AG04449 (cell line): ENCODE measurements at regions of chr22 and their contacts with region 1.

Region 1: DNA sequence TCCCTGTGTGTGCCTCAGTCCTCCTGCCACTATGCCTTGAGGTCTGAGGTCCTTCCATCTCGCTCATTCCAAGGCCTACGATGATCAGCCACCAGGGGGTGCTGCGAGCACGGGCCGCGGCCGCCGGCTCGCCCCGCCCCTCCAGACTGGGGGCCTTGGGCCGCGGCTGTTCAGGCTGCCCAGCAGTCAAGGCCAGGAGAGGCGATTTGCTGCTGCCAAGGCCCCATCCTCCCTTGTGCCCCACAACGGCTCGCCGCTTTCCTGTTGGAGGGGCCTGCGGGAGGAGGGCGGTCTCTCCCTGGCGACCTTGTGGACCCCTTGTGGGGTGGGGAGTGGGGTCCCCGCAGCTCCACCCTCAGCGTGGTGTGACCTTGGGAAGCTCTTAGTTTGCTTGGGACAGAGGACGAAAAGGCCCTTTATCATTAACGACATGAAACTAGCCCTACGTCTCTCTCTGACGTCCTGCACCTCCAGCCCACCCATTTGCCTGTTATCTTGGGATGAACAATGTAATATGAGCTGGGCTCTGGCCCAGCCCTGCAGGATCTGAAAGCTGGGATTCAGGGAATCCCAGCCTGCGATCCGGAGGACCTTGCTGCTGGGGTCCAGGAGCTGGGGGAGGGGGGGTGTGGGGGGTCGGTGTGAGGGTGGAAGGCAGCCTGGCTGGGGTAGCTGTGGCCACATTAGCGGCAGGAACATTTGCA is 5.3 kb upstream of the GALR3 start:
- DNase-seq: no peak
- H3K4me3 ChIP-seq: peak overlapping the region; percentile 10; the same call in 1 of the 2 replicates
- CTCF ChIP-seq: peak; percentile 90

Region 2: DNA sequence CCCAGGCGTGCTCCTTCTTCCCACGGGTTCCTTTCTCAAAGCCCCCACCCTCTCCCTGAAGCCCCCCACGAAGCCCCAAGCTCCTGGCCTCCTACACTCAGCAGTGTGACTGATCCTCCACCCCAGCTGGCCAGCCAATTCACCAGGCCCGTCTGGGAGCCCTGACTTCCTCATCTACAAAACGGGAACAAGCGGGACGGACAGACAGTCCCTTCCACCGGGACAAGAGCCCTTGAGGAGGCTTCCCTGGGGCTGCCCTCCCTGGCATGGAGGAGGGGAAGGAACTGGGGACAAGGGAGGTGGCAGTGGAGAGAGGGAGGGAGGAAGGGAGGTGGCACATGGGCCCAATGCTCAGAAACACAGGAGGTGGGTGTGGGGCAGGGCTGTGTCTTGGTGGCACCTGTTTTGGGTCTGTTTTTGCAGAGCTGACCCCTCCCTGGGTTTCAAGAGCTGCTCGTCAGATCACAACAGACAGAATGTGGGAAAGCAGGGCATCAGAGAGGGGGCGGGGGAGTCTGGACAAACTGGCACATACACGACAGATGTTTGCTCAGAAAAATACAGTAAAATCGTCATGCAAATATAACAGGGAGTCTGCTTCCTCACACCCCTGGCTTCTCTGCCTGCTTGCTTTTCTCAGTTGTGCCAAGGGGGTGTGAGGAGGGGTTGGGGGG is 447.4 kb before region 1 on chr22:
- CTCF ChIA-PET with region 1: no interaction called
- POLR2A ChIA-PET with region 1: no interaction called
- DNase-seq: no peak
- H3K4me3 ChIP-seq: no peak overlapping the region
- CTCF ChIP-seq: no peak

Region 3: DNA sequence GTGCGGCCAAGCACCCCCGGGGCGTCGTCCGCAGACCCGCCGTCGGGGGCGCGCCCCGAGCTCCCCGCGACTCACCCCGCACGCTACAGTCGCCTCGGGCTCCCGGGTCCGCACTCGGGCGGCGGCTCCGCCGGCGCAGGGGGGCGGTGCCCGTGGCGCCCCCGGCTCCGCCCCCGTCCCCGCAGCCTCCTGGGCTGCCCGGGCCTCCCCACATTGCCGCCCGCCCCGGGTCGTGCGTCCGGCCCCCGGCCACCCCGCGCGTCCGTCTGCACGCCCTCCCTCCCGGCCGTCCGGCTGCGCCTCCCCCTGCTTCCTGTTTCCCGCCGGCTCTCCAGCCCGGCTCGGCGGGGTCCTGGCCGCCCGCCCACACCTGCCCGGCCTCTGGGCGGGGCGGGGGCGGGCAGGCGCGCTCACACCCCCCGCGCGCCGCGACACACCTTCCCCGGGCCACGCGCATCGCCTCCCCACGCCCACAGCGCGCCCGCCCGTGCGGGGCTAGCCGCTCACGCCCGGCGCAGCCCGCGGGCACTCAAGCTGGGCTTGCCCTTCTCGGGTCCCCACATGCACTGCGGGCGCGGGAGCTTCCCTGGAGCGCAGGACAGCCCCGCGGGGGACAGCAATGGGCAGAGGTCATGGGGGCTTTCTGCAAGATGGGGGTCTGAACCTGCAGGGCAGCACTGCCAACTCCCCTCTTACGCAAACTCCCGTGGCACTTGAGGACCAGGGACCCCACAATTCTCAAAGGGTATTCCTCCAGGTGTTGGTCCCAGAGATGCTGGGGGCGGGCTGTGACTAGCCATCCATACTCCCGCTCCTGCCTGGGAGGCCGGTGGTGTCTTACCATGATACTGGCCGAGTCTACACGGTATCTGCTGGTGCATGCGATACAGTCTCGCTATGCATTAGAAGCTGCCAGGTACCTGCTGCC is 298.3 kb before region 1 on chr22 and contains the start of gene CARD10:
- CTCF ChIA-PET with region 1: no interaction called
- POLR2A ChIA-PET with region 1: no interaction called
- DNase-seq: no peak
- H3K4me3 ChIP-seq: peak within 1 kb of the TSS; percentile 65
- CTCF ChIP-seq: no peak

Region 4: GRCh38 chr22:37807410-37808293 is 10.2 kb before region 1 on chr22 and contains the start of gene GCAT:
- CTCF ChIA-PET with region 1: interaction called, 92 read pairs
- POLR2A ChIA-PET with region 1: interaction called, 5 read pairs
- DNase-seq: peak; percentile 80
- H3K4me3 ChIP-seq: peak within 1 kb of the TSS; percentile 88
- CTCF ChIP-seq: no peak

Region 5: GRCh38 chr22:37843741-37843990 is 25.8 kb after region 1 on chr22:
- CTCF ChIA-PET with region 1: interaction called, 65 read pairs
- POLR2A ChIA-PET with region 1: interaction called, 8 read pairs
- DNase-seq: no peak
- H3K4me3 ChIP-seq: peak overlapping the region; percentile 70
- CTCF ChIP-seq: no peak

Region 6: GRCh38 chr22:37855462-37855861 is 37.6 kb after region 1 on chr22:
- CTCF ChIA-PET with region 1: interaction called, 223 read pairs
- POLR2A ChIA-PET with region 1: no interaction called
- DNase-seq: no peak
- H3K4me3 ChIP-seq: no peak overlapping the region
- CTCF ChIP-seq: no peak

Region 7: GRCh38 chr22:37933711-37934376 is 116.0 kb after region 1 on chr22:
- CTCF ChIA-PET with region 1: interaction called, 15 read pairs
- POLR2A ChIA-PET with region 1: no interaction called
- DNase-seq: peak; percentile 31
- H3K4me3 ChIP-seq: no peak overlapping the region
- CTCF ChIP-seq: peak; percentile 100

Region 8: GRCh38 chr22:37965940-37966664 is 148.2 kb after region 1 on chr22:
- CTCF ChIA-PET with region 1: interaction called, 84 read pairs
- POLR2A ChIA-PET with region 1: no interaction called
- DNase-seq: no peak
- H3K4me3 ChIP-seq: no peak overlapping the region
- CTCF ChIP-seq: no peak